Ovary (tissue), 10 donors: ENCODE measurements at regions of chr9 and their contacts with region 1.

Region 1: GRCh38 chr9:37174247-37174646 is 53.9 kb downstream of the ZCCHC7 start:
- DNase-seq: no peak
- H3K4me3 ChIP-seq: no peak overlapping the region
- H3K27ac ChIP-seq: no peak overlapping the region
- H3K4me1 ChIP-seq: no peaks in the 10 kb centered on the region
- H3K27me3 ChIP-seq: no peaks in the 10 kb centered on the region
- CTCF ChIP-seq: no peak
- EP300 ChIP-seq: no peak
- POLR2A ChIP-seq: no peak

Region 2: DNA sequence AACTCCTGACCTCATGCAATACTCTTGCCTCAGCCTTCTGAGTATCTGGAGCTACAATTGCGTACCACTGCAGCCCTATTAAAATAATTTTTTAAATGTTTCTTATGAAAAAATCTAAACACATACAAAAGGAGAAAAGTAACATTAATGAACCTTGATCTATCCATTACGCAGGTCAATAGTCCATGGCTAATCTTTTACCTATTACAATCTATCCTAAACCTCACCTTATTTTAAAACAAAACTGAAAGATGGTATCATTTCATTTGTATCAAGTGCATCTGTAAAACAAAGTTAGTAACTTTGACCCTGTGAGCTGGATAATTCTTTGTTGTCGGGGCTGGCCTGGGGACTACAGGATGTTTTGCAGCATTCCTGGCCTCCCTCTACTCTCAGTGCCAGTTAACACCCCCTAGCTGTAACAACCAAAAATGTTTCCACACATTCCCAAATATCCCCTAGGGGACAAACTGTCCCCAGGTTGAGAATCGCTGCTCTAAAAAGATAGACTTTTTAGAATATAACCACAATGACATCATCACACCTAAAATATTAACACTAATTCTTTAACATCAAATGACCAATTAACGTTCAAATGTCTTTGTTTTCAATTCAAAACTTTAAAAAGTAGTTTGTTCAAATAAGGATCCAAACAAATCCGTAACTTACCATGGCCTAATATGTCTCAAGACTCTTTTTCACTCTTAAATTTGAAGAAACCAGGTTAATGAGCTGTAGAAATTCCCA is 829.0 kb before region 1 on chr9:
- intact Hi-C with region 1: loop called in 1 of 4 experiments (anchors 5 kb)
- DNase-seq: no peak
- H3K4me3 ChIP-seq: no peak overlapping the region
- H3K27ac ChIP-seq: no peak overlapping the region
- H3K4me1 ChIP-seq: no peaks in the 10 kb centered on the region
- H3K27me3 ChIP-seq: no peaks in the 10 kb centered on the region
- CTCF ChIP-seq: no peak
- EP300 ChIP-seq: no peak
- POLR2A ChIP-seq: no peak

Region 3: GRCh38 chr9:36788534-36788933 is 385.7 kb before region 1 on chr9:
- intact Hi-C with region 1: no loop called
- DNase-seq: no peak
- H3K4me3 ChIP-seq: no peak overlapping the region
- H3K27ac ChIP-seq: no peak overlapping the region
- H3K4me1 ChIP-seq: no peaks in the 10 kb centered on the region
- H3K27me3 ChIP-seq: no peaks in the 10 kb centered on the region
- CTCF ChIP-seq: no peak
- EP300 ChIP-seq: no peak
- POLR2A ChIP-seq: no peak

Region 4: DNA sequence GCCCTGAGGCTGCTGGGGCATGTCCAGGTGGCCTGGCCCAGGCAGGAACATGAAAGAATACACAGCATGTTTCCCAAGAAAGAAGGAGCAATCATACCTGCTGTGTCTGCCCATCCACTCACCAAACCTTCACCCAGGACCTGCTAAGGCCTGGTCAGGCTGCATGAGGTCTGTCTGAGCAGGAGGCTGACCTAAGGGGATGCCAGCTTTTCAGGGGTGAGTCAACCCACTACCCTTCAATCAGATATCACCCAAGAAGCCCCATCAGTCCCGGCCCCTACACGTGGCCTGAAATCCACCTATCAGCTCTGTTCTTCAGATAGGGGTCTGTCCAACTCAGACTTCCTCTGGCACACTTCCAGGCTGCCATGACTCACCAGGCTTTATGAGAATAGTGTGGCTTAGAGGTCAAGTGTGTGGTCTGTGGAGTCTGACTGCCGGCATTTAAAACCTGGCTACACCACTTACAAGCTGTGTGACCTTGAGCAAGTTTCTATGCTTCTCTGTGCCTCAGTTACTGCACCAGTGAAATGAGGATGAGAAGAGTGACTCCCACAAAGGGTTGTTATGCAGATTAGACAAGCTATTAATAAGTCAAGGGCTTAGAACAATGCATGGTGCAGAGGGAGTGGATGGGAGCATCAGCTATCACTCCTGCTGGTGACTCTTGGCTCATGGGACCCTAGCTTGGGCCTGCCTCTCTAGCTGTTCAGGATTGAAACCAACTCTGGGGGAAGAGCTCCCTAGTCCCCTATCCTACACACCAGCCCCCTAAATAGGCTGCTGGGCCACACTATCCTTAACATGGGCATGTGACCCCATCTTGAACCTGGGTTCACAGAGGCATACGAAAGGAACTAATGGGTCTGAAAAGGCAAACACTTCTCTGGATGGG is 270.5 kb before region 1 on chr9:
- intact Hi-C with region 1: no loop called
- DNase-seq: peak in 3 of 5 donors; percentile 40 to 54 (median 41)
- H3K4me3 ChIP-seq: no peak overlapping the region
- H3K27ac ChIP-seq: no peak overlapping the region
- H3K4me1 ChIP-seq: no peaks in the 10 kb centered on the region
- H3K27me3 ChIP-seq: no peaks in the 10 kb centered on the region
- CTCF ChIP-seq: no peak
- EP300 ChIP-seq: no peak
- POLR2A ChIP-seq: no peak